ENCODE measurements at regions of chr14 and their contacts with region 1.

Region 1: GRCh38 chr14:88189417-88190191 is 133.5 kb downstream of the KCNK10 start:
- DNase-seq: peak in 1 of 3 donors; percentile 99
- ATAC-seq: peak; percentile 98
- H3K4me3 ChIP-seq: no peak overlapping the region
- H3K4me1 ChIP-seq: peaks cover 15% of the 10 kb centered on the region
- CTCF ChIP-seq: peak; percentile 53

Region 2: GRCh38 chr14:88385345-88386101 is 195.9 kb after region 1 on chr14 and contains the start of gene SPATA7:
- intact Hi-C with region 1: loop called in 1 of 2 experiments (anchors 10 kb)
- DNase-seq: peak; percentile 92 to 95 (median 95)
- ATAC-seq: peak; percentile 100
- H3K4me3 ChIP-seq: peak within 1 kb of the TSS; percentile 55
- H3K4me1 ChIP-seq: no peaks in the 10 kb centered on the region
- CTCF ChIP-seq: no peak
- total RNA-seq, gene SPATA7: 6.7 to 15.9 (median 7.1) TPM